ENCODE measurements at regions of chr9 and their contacts with region 1.

Region 1: GRCh38 chr9:104747558-104748358 is at the start of gene NIPSNAP3A:
- DNase-seq: peak; percentile 78 to 96 (median 89)
- ATAC-seq: peak; percentile 93
- H3K4me3 ChIP-seq: peak within 1 kb of the TSS; percentile 87
- H3K4me3 Mint-ChIP-seq: peak within 1 kb of the TSS; percentile 88 to 98 (median 96)
- H3K27ac ChIP-seq: peak within 1 kb of the TSS; percentile 93
- H3K27ac Mint-ChIP-seq: peak within 1 kb of the TSS; percentile 92 to 99 (median 97)
- H3K4me1 ChIP-seq: peaks cover 0 to 8% of the 10 kb centered on the region in 2 donors
- H3K4me1 Mint-ChIP-seq: peaks cover 14 to 26% (median 22%) of the 10 kb centered on the region in 7 donors
- H3K27me3 ChIP-seq: no peaks in the 10 kb centered on the region
- H3K27me3 Mint-ChIP-seq: peaks cover 0 to 2% (median 0%) of the 10 kb centered on the region in 5 donors
- total RNA-seq, gene NIPSNAP3A: 7.1 to 17.4 (median 13.4) TPM

Region 2: GRCh38 chr9:104177676-104178075 is 570.1 kb before region 1 on chr9:
- CTCF ChIA-PET with region 1: no interaction called
- POLR2A ChIA-PET with region 1: no interaction called
- intact Hi-C with region 1: loop called in 1 of 2 experiments (anchors 2 kb)
- DNase-seq: no peak
- ATAC-seq: no peak
- H3K4me3 ChIP-seq: no peak overlapping the region
- H3K4me3 Mint-ChIP-seq: no peak overlapping the region
- H3K27ac ChIP-seq: no peak overlapping the region
- H3K27ac Mint-ChIP-seq: no peak overlapping the region
- H3K4me1 ChIP-seq: no peaks in the 10 kb centered on the region
- H3K4me1 Mint-ChIP-seq: no peaks in the 10 kb centered on the region
- H3K27me3 ChIP-seq: no peaks in the 10 kb centered on the region
- H3K27me3 Mint-ChIP-seq: peaks cover 0 to 7% (median 2%) of the 10 kb centered on the region in 5 donors

Region 3: GRCh38 chr9:104968025-104968982 is 220.5 kb after region 1 on chr9:
- CTCF ChIA-PET with region 1: no interaction called
- POLR2A ChIA-PET with region 1: no interaction called
- intact Hi-C with region 1: loop called (anchors 1 to 2 kb)
- DNase-seq: peak; percentile 80 to 95 (median 91)
- ATAC-seq: peak; percentile 99
- H3K4me3 ChIP-seq: peak overlapping the region; percentile 85
- H3K4me3 Mint-ChIP-seq: peak overlapping the region; percentile 82 to 96 (median 94)
- H3K27ac ChIP-seq: peak overlapping the region; percentile 69
- H3K27ac Mint-ChIP-seq: peak overlapping the region; percentile 64 to 92 (median 86)
- H3K4me1 ChIP-seq: peaks cover 0 to 6% of the 10 kb centered on the region in 2 donors
- H3K4me1 Mint-ChIP-seq: peaks cover 12 to 25% (median 17%) of the 10 kb centered on the region in 7 donors
- H3K27me3 ChIP-seq: peaks cover 0 to 4% of the 10 kb centered on the region in 2 donors
- H3K27me3 Mint-ChIP-seq: peaks cover 0 to 30% (median 0%) of the 10 kb centered on the region in 5 donors

Region 4: DNA sequence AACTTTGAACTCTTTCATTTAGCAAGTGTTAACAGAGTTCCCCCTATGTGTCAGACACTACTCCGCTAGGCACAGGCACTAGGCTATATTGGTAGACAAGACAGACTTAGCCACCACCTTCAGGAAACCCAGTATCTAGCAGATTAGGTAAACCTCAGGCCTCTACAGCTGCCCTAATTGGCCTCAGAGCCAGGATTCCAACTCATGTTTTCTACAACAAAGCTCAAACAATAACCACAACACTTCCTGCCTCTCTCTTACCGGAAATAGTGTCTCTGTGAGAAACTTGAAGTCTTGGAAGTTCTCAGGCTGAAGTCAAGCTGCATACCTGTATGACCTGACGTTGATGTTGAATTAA is 380.1 kb after region 1 on chr9:
- CTCF ChIA-PET with region 1: no interaction called
- POLR2A ChIA-PET with region 1: no interaction called
- intact Hi-C with region 1: loop called (anchors 2 to 10 kb)
- DNase-seq: peak in 8 of 9 donors; percentile 41 to 92 (median 90)
- ATAC-seq: peak; percentile 99
- H3K4me3 ChIP-seq: no peak overlapping the region
- H3K4me3 Mint-ChIP-seq: peak overlapping the region; percentile 35 to 84 (median 74)
- H3K27ac ChIP-seq: no peak overlapping the region
- H3K27ac Mint-ChIP-seq: peak overlapping the region; percentile 42 to 95 (median 78)
- H3K4me1 ChIP-seq: peaks cover 31 to 55% of the 10 kb centered on the region in 2 donors
- H3K4me1 Mint-ChIP-seq: peaks cover 36 to 67% (median 63%) of the 10 kb centered on the region in 7 donors
- H3K27me3 ChIP-seq: no peaks in the 10 kb centered on the region
- H3K27me3 Mint-ChIP-seq: peaks cover 0 to 35% (median 0%) of the 10 kb centered on the region in 5 donors

Region 5: DNA sequence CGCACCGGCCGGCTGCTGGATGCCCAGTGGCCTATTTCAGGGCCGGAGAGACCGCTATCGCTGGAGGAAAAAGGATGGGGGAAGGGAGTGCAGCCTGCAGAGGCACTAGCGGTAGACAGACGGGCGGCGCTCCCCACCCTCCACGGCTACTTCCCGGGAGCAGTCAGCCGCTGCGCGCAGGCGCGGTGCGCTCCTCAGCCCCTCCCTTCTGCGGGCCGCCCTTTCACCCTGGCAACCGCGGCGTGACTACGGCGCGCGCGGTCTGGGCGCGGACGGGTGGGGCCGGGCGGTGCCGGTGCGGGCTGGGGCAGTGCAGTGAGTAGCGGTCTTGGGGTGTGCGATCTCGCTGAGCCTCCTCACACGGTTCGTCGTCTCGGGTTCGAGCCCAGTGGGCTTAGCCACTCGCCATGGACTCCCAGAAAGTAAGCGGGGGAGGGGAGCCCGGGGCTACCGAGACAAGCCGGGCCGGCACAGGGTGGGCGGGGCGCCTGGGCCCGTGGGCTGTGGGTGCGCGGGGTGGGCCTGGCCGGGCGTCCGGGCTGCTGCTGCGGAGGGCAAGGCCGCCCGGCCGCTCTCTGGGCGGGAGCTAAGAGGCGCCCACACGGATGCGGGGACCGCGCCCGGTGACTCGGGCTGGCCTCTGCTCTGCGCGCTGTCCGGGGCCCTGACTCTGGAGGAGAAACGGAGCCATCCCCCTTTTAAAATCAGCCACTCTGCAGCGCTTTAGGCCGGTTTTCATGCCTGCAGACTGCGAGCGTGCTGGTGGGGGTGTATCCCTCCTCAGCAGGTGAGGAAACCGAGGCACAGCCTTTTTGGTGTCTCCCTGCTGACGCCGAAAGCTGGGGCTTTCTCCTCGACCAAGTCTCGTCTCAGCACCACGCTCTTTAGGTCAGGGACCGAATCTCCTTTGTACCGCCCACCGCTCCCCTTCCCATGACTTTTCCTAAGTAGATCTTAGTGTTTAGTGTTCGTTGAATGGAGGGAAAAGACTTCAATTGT is 700.4 kb after region 1 on chr9 and contains the start of gene FSD1L:
- CTCF ChIA-PET with region 1: no interaction called
- POLR2A ChIA-PET with region 1: no interaction called
- intact Hi-C with region 1: loop called in 1 of 2 experiments (anchors 1 kb)
- DNase-seq: peak; percentile 38 to 86 (median 67)
- ATAC-seq: peak; percentile 94
- H3K4me3 ChIP-seq: peak within 1 kb of the TSS; percentile 81
- H3K4me3 Mint-ChIP-seq: peak within 1 kb of the TSS; percentile 70 to 89 (median 84)
- H3K27ac ChIP-seq: peak within 1 kb of the TSS; percentile 43
- H3K27ac Mint-ChIP-seq: peak within 1 kb of the TSS in 4 of 9 donors; percentile 34 to 80 (median 46)
- H3K4me1 ChIP-seq: peaks cover 3 to 5% of the 10 kb centered on the region in 2 donors
- H3K4me1 Mint-ChIP-seq: peaks cover 0 to 35% (median 9%) of the 10 kb centered on the region in 7 donors
- H3K27me3 ChIP-seq: no peaks in the 10 kb centered on the region
- H3K27me3 Mint-ChIP-seq: peaks cover 0 to 8% (median 3%) of the 10 kb centered on the region in 5 donors
- total RNA-seq, gene FSD1L: 0.38 to 5.8 (median 0.61) TPM